Ascending aorta (tissue), 2 donors: ENCODE measurements at regions of chr5 and their contacts with region 1.

Region 1: DNA sequence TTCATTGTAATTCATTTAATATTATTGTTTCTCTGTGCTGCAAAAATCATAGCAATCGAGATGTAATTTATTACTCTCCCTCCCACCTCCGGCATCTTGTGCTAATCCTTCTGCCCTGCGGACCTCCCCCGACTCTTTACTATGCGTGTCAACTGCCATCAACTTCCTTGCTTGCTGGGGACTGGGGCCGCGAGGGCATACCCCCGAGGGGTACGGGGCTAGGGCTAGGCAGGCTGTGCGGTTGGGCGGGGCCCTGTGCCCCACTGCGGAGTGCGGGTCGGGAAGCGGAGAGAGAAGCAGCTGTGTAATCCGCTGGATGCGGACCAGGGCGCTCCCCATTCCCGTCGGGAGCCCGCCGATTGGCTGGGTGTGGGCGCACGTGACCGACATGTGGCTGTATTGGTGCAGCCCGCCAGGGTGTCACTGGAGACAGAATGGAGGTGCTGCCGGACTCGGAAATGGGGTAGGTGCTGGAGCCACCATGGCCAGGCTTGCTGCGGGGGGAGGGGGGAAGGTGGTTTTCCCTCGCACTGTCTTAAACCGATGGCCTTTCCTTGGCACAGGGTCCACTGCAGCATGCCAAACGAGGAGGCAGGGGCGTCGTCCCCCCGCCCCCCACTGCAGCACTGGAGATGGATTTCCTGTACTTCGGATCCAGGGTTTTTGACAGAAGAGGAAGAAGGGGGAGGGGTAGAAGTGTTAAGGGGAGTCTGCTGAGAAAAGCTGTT is at the start of gene APC:
- DNase-seq: peak; percentile 84 to 97
- H3K4me3 ChIP-seq: peak within 1 kb of the TSS; percentile 71 to 78
- H3K27ac ChIP-seq: peak within 1 kb of the TSS; percentile 71 to 72
- H3K4me1 ChIP-seq: peaks cover 0 to 18% of the 10 kb centered on the region in 2 donors
- H3K27me3 ChIP-seq: no peaks in the 10 kb centered on the region
- CTCF ChIP-seq: peak in 1 of 3 experiments; percentile 27
- total RNA-seq, gene APC: 197 TPM

Region 2: GRCh38 chr5:112210430-112211005 is 527.1 kb before region 1 on chr5:
- intact Hi-C with region 1: no loop called
- DNase-seq: no peak
- H3K4me3 ChIP-seq: no peak overlapping the region
- H3K27ac ChIP-seq: no peak overlapping the region
- H3K4me1 ChIP-seq: no peaks in the 10 kb centered on the region
- H3K27me3 ChIP-seq: no peaks in the 10 kb centered on the region
- CTCF ChIP-seq: peak; percentile 35 to 63 (median 42)

Region 3: DNA sequence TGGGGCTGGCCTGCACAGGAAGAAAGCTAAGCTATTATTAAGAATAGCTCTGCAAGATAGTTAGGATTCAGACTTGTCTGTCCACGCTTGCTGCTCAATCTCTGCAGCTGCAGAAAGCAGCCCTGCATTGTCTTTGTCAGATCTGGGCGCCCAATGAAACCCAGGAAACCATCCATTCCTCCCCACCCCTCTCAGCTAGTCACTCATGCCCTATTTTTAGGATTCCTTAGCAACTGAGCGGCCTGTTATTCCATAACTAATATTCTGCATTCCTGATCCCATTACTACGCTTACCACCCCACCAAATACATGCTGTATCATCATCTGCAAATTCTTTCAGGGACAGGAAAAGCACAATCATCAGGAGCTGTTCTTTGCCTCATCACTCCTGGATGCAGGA is 52.9 kb before region 1 on chr5:
- intact Hi-C with region 1: loop called (anchors 2 kb)
- DNase-seq: peak in 1 of 2 donors; percentile 74
- H3K4me3 ChIP-seq: no peak overlapping the region
- H3K27ac ChIP-seq: peak overlapping the region; percentile 71 to 73
- H3K4me1 ChIP-seq: peaks cover 0 to 17% of the 10 kb centered on the region in 2 donors
- H3K27me3 ChIP-seq: no peaks in the 10 kb centered on the region
- CTCF ChIP-seq: no peak